Activated B cell treated with CpG ODN at 0.5 μM for 24 hours (primary cell): ENCODE measurements at regions of chr12 and their contacts with region 1.

Region 1: GRCh38 chr12:110468212-110469048 is at the starts of genes FAM216A and GPN3:
- DNase-seq: peak; percentile 86
- ATAC-seq: peak; percentile 91
- H3K4me3 Mint-ChIP-seq: peak within 1 kb of the TSS; percentile 100
- H3K27ac Mint-ChIP-seq: peak within 1 kb of the TSS; percentile 96
- H3K4me1 Mint-ChIP-seq: peaks cover 41% of the 10 kb centered on the region
- H3K27me3 Mint-ChIP-seq: no peaks in the 10 kb centered on the region
- CTCF ChIP-seq: no peak
- total RNA-seq, gene FAM216A: 9.7 and 9.9 TPM in 2 replicates
- total RNA-seq, gene GPN3: 17.0 and 19.0 TPM in 2 replicates

Region 2: DNA sequence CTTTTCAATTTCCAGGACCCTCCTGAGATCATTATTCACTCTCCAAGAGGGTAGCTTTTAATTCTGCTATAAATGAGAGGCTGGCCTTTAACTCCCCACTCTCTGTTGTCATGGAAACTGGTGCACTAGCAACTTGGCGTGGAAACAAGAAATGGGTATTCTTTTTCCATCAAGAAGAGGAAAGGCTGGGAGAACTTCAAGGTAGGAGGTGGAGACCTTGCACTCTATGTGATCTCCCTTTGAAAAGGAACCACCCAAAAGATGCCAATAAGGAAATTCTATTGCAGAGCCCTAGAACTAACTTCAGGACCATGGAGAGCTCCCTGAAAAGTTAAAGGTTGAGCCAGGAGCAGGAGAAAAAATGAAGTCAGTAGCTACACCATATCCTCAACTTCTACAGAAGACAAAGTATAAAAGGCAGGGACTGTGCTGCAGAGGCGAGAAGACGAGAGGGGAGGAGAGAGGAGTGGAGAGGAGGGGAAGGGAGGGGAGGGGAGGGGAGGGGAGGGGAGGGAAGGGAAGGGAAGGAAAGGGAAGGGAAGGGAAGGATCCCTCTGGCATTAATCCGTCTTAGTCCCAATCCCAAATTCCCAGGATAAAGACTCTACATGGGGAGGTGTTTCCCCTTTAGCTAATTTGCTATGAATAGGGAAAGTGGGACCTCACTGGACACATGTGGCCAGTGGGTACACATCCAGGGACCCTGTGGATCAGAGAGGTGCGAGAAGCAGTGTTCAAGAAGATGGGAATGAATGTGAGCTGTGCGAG is 2000.0 kb before region 1 on chr12:
- CTCF ChIA-PET with region 1: no interaction called
- POLR2A ChIA-PET with region 1: no interaction called
- intact Hi-C with region 1: no loop called
- DNase-seq: no peak
- ATAC-seq: no peak
- H3K4me3 Mint-ChIP-seq: no peak overlapping the region
- H3K27ac Mint-ChIP-seq: no peak overlapping the region
- H3K4me1 Mint-ChIP-seq: no peaks in the 10 kb centered on the region
- H3K27me3 Mint-ChIP-seq: peaks cover 23% of the 10 kb centered on the region
- CTCF ChIP-seq: no peak

Region 3: GRCh38 chr12:110501752-110502738 is 33.6 kb after region 1 on chr12 and contains the starts of genes RAD9B and VPS29:
- CTCF ChIA-PET with region 1: interaction called, 14 read pairs
- POLR2A ChIA-PET with region 1: interaction called, 41 read pairs
- intact Hi-C with region 1: loop called (anchors 1 kb)
- DNase-seq: peak; percentile 95
- ATAC-seq: peak; percentile 95
- H3K4me3 Mint-ChIP-seq: peak within 1 kb of the TSS; percentile 99
- H3K27ac Mint-ChIP-seq: peak within 1 kb of the TSS; percentile 96
- H3K4me1 Mint-ChIP-seq: peaks cover 36% of the 10 kb centered on the region
- H3K27me3 Mint-ChIP-seq: no peaks in the 10 kb centered on the region
- CTCF ChIP-seq: no peak
- total RNA-seq, gene RAD9B: 1.2 and 1.3 TPM in 2 replicates
- total RNA-seq, gene VPS29: 99.6 and 117 TPM in 2 replicates

Region 4: GRCh38 chr12:110583137-110584059 is 115.0 kb after region 1 on chr12 and contains the start of gene PPTC7:
- CTCF ChIA-PET with region 1: interaction called, 4 read pairs
- POLR2A ChIA-PET with region 1: interaction called, 5 read pairs
- intact Hi-C with region 1: loop called (anchors 1 kb)
- DNase-seq: peak; percentile 85
- ATAC-seq: peak; percentile 93
- H3K4me3 Mint-ChIP-seq: peak within 1 kb of the TSS; percentile 90
- H3K27ac Mint-ChIP-seq: peak within 1 kb of the TSS; percentile 87
- H3K4me1 Mint-ChIP-seq: peaks cover 70% of the 10 kb centered on the region
- H3K27me3 Mint-ChIP-seq: no peaks in the 10 kb centered on the region
- CTCF ChIP-seq: no peak
- total RNA-seq, gene PPTC7: 34.5 and 40.8 TPM in 2 replicates

Region 5: GRCh38 chr12:110689281-110690126 is 221.1 kb after region 1 on chr12:
- CTCF ChIA-PET with region 1: no interaction called
- POLR2A ChIA-PET with region 1: no interaction called
- intact Hi-C with region 1: loop called (anchors 5 kb)
- DNase-seq: peak; percentile 61
- ATAC-seq: peak; percentile 63
- H3K4me3 Mint-ChIP-seq: peak overlapping the region; percentile 92
- H3K27ac Mint-ChIP-seq: peak overlapping the region; percentile 89
- H3K4me1 Mint-ChIP-seq: peaks cover 82% of the 10 kb centered on the region
- H3K27me3 Mint-ChIP-seq: no peaks in the 10 kb centered on the region
- CTCF ChIP-seq: no peak

Region 6: GRCh38 chr12:110750784-110751461 is 282.5 kb after region 1 on chr12:
- CTCF ChIA-PET with region 1: no interaction called
- POLR2A ChIA-PET with region 1: no interaction called
- intact Hi-C with region 1: no loop called
- DNase-seq: no peak
- ATAC-seq: no peak
- H3K4me3 Mint-ChIP-seq: no peak overlapping the region
- H3K27ac Mint-ChIP-seq: no peak overlapping the region
- H3K4me1 Mint-ChIP-seq: no peaks in the 10 kb centered on the region
- H3K27me3 Mint-ChIP-seq: no peaks in the 10 kb centered on the region
- CTCF ChIP-seq: no peak

Region 7: DNA sequence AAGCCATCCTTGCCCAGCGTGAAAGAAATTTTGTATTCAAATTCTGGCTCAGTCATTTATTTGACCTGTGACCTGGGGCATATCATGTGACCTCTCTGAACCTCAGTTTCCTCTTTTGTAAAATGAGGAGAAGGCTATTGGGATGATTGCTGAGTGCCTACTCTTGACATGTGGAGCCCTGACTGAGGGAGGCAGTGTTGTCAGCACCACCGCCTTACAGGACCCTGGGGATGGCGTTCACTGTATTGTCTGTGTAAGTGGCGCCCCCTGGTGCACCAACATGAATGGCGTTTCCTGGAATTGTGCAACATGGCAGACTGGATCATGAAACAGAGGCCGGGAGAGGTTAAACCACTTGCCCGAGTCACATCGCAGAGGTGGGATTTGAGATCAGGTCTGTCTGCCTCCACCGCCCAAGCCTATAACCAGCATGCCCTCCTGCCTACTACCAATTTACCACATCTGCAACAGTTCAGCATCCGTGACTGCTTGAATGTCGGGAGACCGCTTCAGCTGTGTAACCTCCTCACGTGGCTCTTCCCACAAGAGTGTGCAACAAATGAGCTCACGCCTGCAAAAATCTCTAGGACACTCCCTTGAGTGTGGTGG is 358.3 kb after region 1 on chr12:
- CTCF ChIA-PET with region 1: interaction called, 3 read pairs
- POLR2A ChIA-PET with region 1: no interaction called
- intact Hi-C with region 1: loop called (anchors 1 kb)
- DNase-seq: peak; percentile 74
- ATAC-seq: peak; percentile 99
- H3K4me3 Mint-ChIP-seq: peak overlapping the region; percentile 80
- H3K27ac Mint-ChIP-seq: peak overlapping the region; percentile 41
- H3K4me1 Mint-ChIP-seq: peaks cover 6% of the 10 kb centered on the region
- H3K27me3 Mint-ChIP-seq: peaks cover 4% of the 10 kb centered on the region
- CTCF ChIP-seq: no peak